AG04449 (cell line): ENCODE measurements at regions of chr6 and their contacts with region 1.

Region 1: DNA sequence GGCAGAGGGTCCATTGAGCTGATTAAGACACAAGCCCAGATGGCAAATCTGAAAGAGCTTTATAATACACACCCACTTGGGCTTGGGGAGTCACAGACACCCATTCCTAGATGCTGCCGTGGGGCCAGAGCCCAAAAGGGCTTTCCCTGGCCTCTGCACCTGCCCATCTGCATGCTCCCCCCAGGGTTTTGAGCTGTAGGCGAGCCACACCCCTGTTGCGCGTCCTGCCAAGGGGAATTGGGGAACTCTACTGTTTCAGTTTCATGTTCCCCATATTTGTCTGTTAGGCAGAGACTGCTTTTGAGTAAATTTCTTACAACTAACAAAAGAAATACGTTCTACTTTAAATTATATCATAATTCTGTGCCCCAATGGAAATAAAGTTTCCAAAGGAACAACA is 52.9 kb upstream of the FNDC1 start:
- DNase-seq: no peak
- H3K4me3 ChIP-seq: no peak overlapping the region
- CTCF ChIP-seq: no peak

Region 2: DNA sequence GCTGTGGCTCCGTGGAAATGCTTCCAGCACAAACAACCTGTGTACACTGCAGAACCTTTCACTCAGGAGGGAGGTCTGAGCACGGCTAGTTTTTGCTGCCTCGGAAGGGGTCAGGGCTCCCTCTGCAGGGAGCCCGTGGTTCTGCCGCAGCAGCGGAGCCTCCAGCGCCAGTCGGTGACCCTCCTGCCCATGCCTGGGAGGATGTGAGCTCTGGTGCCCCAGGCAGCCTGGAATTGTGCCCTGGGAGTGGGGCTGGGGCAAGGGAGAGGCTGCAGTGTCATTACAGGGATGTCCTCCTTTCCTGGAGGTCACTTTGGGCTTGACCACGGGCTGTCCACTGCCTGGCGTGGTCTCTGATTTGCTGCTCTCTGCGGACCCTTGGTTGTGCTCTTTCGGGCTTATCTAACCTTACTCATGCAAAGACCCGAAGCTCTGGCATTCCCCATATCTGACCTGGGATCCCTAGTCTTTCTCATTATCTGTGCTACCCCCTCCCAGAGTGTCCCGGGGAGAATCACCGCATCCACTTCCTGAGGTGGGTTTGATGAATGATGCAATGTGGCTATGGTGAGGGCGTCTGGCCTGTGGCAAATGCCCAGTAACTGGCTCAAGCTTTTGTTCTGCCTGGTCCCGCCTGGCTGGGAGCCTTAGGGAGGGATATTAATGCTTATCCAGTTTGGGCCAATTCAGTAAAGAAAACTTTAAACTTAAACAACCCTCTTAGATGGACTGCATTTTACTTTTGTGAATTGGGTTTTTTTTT is 12.0 kb before region 1 on chr6:
- CTCF ChIA-PET with region 1: interaction called, 23 read pairs
- POLR2A ChIA-PET with region 1: no interaction called
- DNase-seq: no peak
- H3K4me3 ChIP-seq: no peak overlapping the region
- CTCF ChIP-seq: peak; percentile 92

Region 3: DNA sequence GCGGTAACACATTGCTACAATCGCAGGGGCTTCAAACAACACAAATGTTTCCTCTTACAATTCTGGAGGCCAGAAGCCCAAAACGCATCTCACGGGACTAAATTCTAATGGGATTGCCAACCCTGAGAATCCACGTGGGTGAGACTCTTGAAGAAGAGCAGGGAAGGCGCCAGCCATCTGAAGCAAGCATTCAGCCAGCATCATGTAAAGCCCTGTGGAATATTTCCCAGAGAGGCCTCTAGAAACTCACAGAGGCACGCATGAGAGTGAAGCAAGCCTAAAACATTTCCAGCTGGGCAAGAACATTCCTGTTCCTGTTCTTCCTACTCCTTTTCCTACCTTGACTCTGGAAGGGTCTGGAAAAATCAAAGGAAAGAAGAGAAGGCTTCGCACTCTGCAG is 33.3 kb after region 1 on chr6:
- CTCF ChIA-PET with region 1: no interaction called
- POLR2A ChIA-PET with region 1: no interaction called
- DNase-seq: no peak
- H3K4me3 ChIP-seq: no peak overlapping the region
- CTCF ChIP-seq: no peak

Region 4: DNA sequence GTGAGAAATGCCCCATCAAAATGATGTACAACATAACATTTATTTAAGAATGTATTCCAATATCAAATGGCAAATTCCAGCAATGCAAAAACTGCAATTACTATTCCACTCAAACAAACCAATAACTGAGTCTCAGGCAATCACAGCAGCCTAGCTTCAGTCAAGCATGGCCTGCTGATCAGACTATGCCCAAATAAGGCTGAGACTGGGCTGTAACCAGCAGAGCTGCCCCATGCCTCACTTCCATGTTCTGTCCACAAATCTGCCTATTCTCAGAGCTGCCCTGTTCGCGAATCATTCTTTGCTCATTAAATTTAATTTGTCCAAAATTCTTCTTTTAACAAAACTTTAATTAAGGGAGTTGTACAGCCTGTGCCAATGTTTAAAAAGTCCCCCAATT is 208.3 kb after region 1 on chr6:
- CTCF ChIA-PET with region 1: no interaction called
- POLR2A ChIA-PET with region 1: no interaction called
- DNase-seq: no peak
- H3K4me3 ChIP-seq: no peak overlapping the region
- CTCF ChIP-seq: no peak